RWPE1 (cell line): ENCODE measurements at regions of chr22 and their contacts with region 1.

Region 1: DNA sequence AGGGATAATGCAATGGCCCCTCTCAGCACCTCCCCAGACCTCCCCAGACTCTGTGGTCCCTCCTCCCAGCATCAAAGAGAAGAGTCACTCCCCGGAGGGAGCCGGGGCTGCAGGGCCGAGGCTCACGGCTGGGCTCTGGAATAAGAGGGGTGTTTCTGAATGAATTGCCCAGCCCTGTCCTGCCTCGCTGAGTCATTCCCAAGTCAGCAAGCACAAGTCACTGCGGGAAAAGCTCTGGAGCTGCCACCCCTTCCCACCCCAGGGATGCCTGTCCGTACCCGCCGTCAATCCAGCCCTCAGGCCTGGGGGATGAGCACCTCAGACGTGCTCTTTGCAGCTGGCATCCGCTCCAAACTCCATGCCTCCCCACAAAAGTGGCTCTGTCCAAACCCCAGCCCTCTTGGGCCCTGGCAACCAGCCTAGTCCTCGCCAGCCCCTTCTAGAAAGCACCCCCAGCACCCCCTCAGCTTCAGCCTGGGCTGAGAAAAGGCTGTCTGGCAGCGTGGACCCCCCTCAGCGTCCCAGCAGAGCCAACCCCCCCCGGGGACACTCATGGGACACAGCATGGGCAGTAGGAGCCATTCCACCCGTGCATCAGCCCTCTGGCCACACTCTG is 22.7 kb downstream of the CELSR1 start:
- DNase-seq: peak; percentile 92
- H3K27ac ChIP-seq: peak overlapping the region; percentile 99
- CTCF ChIP-seq: no peak

Region 2: DNA sequence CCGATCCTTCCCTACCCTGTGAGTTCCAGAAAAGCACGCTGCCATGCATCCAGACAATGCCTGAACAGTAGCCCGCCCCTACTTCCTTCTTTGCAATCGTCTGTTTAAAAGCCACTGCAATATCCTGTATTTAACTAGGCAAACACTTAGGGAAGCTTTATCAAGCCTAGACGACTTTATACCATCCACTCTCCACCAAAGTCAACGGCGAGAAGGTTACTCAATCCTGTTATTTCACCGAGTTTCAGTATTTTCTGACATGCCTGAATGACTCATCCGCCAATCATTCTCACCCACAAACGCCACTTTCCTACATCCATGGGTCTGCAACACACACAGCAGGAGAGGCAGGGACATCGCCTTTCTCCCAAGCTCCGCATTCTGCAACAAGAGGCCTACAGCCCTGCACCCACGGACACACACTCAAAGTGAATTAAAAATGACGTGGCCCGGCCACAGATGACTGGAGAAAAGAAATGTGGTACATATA is 13.5 kb after region 1 on chr22:
- CTCF ChIA-PET with region 1: no interaction called
- POLR2A ChIA-PET with region 1: interaction called, 14 read pairs
- DNase-seq: peak; percentile 83
- H3K27ac ChIP-seq: peak overlapping the region; percentile 99
- CTCF ChIP-seq: no peak

Region 3: GRCh38 chr22:46619830-46620501 is 105.3 kb after region 1 on chr22 and contains the start of gene GRAMD4:
- CTCF ChIA-PET with region 1: no interaction called
- POLR2A ChIA-PET with region 1: no interaction called
- DNase-seq: no peak
- H3K27ac ChIP-seq: peak within 1 kb of the TSS; percentile 6; the same call in 1 of the 2 replicates
- CTCF ChIP-seq: no peak